Caco-2 (cell line): ENCODE measurements at regions of chr7 and their contacts with region 1.

Region 1: DNA sequence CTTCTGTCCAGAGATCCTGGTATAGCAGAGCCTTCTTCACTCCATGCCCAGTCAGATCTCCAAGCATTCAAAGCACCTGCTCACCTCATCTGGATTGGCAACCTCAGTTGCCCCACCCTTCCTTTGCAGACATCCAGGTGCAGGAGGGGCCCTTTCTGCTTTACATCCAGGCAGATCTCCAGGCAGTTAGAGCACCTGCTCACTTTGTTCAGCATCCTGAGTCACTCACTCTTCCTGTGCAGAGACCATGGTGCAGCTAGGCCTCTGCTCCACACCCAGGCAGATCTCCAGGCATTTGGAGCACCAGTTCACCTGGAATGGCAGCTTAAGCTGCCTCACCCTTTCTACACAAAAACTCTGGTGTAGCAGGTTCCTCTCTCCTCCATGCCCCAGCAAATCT is 153.1 kb downstream of the CDK14 start:
- DNase-seq: no peak
- H3K4me3 ChIP-seq: no peak overlapping the region
- H3K4me3 Mint-ChIP-seq: no peak overlapping the region
- H3K27ac Mint-ChIP-seq: no peak overlapping the region
- H3K4me1 ChIP-seq: no peaks in the 10 kb centered on the region
- H3K4me1 Mint-ChIP-seq: no peaks in the 10 kb centered on the region
- H3K27me3 ChIP-seq: no peaks in the 10 kb centered on the region
- H3K27me3 Mint-ChIP-seq: no peaks in the 10 kb centered on the region
- CTCF ChIP-seq: no peak

Region 2: GRCh38 chr7:90690159-90690858 is 59.0 kb before region 1 on chr7:
- CTCF ChIA-PET with region 1: interaction called, 3 read pairs
- POLR2A ChIA-PET with region 1: no interaction called
- intact Hi-C with region 1: loop called (anchors 1 kb)
- DNase-seq: no peak
- H3K4me3 ChIP-seq: no peak overlapping the region
- H3K4me3 Mint-ChIP-seq: no peak overlapping the region
- H3K27ac Mint-ChIP-seq: no peak overlapping the region
- H3K4me1 ChIP-seq: peaks cover 34% of the 10 kb centered on the region
- H3K4me1 Mint-ChIP-seq: peaks cover 25% of the 10 kb centered on the region
- H3K27me3 ChIP-seq: no peaks in the 10 kb centered on the region
- H3K27me3 Mint-ChIP-seq: no peaks in the 10 kb centered on the region
- CTCF ChIP-seq: peak in 1 of 2 experiments; percentile 2

Region 3: GRCh38 chr7:90720984-90721760 is 28.1 kb before region 1 on chr7:
- CTCF ChIA-PET with region 1: interaction called, 3 read pairs
- POLR2A ChIA-PET with region 1: no interaction called
- intact Hi-C with region 1: loop called (anchors 2 kb)
- DNase-seq: peak; percentile 89 to 92
- H3K4me3 ChIP-seq: no peak overlapping the region
- H3K4me3 Mint-ChIP-seq: peak overlapping the region; percentile 30
- H3K27ac Mint-ChIP-seq: peak overlapping the region; percentile 87
- H3K4me1 ChIP-seq: peaks cover 62% of the 10 kb centered on the region
- H3K4me1 Mint-ChIP-seq: peaks cover 37% of the 10 kb centered on the region
- H3K27me3 ChIP-seq: no peaks in the 10 kb centered on the region
- H3K27me3 Mint-ChIP-seq: no peaks in the 10 kb centered on the region
- CTCF ChIP-seq: no peak

Region 4: DNA sequence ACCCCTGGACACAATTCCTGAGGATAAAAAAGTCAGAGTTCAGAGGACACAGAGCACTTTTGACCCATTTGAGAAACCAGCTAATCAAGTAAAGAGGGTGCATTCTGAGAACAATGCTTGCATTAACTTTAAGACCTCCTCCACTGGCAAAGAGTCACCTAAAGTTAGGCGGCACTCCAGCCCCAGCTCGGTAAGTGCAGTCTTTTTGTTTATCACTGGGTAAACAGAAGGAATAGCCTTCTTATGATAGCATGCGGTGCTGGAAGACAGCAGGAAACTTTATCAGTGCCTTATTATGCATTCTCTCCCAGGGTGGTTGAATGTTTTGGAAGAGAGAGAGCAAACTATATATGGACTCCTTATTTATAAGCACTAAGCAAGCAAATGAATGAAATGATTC is 22.6 kb before region 1 on chr7:
- CTCF ChIA-PET with region 1: no interaction called
- POLR2A ChIA-PET with region 1: no interaction called
- intact Hi-C with region 1: loop called (anchors 2 kb)
- DNase-seq: peak; percentile 44 to 61
- H3K4me3 ChIP-seq: no peak overlapping the region; the same call in 1 of the 2 replicates
- H3K4me3 Mint-ChIP-seq: peak overlapping the region; percentile 54
- H3K27ac Mint-ChIP-seq: peak overlapping the region; percentile 30
- H3K4me1 ChIP-seq: peaks cover 29% of the 10 kb centered on the region
- H3K4me1 Mint-ChIP-seq: peaks cover 40% of the 10 kb centered on the region
- H3K27me3 ChIP-seq: no peaks in the 10 kb centered on the region
- H3K27me3 Mint-ChIP-seq: no peaks in the 10 kb centered on the region
- CTCF ChIP-seq: no peak

Region 5: GRCh38 chr7:90886416-90886815 is 137.2 kb after region 1 on chr7:
- CTCF ChIA-PET with region 1: no interaction called
- POLR2A ChIA-PET with region 1: no interaction called
- intact Hi-C with region 1: no loop called
- DNase-seq: no peak
- H3K4me3 ChIP-seq: no peak overlapping the region
- H3K4me3 Mint-ChIP-seq: no peak overlapping the region
- H3K27ac Mint-ChIP-seq: no peak overlapping the region
- H3K4me1 ChIP-seq: no peaks in the 10 kb centered on the region
- H3K4me1 Mint-ChIP-seq: no peaks in the 10 kb centered on the region
- H3K27me3 ChIP-seq: no peaks in the 10 kb centered on the region
- H3K27me3 Mint-ChIP-seq: no peaks in the 10 kb centered on the region
- CTCF ChIP-seq: no peak